Gastrocnemius medialis (tissue), 4 donors: ENCODE measurements at regions of chr3 and their contacts with region 1.

Region 1: DNA sequence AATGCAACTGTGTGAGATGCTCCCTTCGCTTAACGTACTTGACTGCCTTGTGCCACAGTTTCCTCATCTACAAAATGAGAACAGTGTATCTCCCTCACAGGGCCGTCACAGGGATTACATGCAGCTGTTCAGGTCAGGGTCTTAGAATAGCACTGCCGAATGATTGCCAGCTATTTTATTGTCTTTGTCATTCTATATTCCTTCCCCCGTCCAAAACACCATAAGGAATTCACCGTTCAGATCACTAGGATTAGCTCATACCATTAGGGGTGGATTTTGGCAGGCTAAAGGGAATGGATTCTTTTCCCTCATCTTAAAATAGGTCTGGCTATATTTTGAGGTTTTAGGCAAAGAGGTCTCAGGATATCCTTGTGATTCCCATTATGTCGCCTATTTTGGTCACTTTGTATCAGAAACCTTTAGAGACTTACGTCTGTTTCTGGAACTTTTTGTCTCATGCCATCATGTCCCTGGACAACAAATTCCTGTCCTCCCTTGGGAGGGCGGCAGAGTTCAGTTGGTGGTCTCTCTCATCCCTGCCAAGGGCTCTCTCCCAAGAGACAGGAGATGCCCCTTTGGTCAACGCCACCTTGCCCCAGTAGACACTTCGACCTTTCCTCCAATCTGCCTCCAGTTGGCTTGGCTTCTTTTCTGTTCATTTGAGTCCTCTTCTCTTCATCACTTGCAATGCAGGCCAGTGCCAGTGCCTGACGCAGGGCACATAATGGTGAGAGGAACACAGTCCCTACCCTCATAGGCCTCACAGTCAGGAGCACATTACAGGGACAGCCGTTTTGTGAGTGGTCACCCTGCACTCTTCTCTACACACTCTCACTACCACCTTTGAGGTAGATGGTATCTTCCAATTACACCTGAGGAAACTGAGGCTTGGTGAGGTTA is 171.6 kb upstream of the BHLHE40 start:
- DNase-seq: peak; percentile 45 to 81
- ATAC-seq: peak; percentile 82 to 90
- H3K4me3 ChIP-seq: no peak overlapping the region
- H3K27ac ChIP-seq: peak overlapping the region; percentile 76 to 89 (median 80)
- H3K4me1 ChIP-seq: peaks cover 16 to 31% of the 10 kb centered on the region in 2 donors
- H3K27me3 ChIP-seq: no peaks in the 10 kb centered on the region
- CTCF ChIP-seq: peak in 4 of 5 experiments; percentile 25 to 46 (median 33)
- POLR2A ChIP-seq: peak; percentile 9 to 46

Region 2: GRCh38 chr3:4571690-4572334 is 235.8 kb before region 1 on chr3:
- in situ Hi-C with region 1: no loop called
- intact Hi-C with region 1: no loop called
- DNase-seq: no peak
- ATAC-seq: no peak
- H3K4me3 ChIP-seq: no peak overlapping the region
- H3K27ac ChIP-seq: no peak overlapping the region
- H3K4me1 ChIP-seq: no peaks in the 10 kb centered on the region
- H3K27me3 ChIP-seq: no peaks in the 10 kb centered on the region
- CTCF ChIP-seq: no peak
- POLR2A ChIP-seq: no peak

Region 3: DNA sequence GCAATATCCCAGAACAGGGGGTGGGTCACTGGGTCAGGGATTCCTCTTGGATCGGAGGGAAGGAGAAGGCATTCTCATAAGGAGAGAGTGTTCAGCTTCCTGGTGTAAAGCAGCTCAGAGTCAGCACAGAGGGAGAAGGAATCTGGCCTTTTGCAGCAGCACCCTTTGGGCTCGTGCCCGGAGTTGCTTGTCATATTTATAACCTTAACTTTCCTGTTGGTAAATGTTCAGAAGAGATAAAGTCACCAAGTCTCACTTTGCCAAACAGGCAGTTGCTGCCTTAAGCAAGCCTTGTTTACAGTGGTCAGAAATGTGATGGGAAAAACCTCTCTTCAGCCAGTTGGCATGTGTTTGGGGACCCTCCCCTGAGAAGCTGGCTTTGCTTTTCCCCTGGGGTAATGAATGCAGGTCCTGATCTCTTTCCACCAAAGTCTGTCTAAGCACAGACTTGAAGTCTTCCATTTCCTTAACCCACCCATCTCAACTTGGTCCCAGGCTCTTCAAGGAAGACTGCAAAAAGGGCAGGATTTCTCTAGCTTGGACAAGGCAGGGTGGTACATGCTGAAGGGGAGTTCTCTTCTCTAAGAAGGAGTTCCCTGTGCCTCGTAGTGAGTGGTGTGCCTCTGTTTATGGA is 35.3 kb before region 1 on chr3:
- in situ Hi-C with region 1: no loop called
- intact Hi-C with region 1: loop called (anchors 2 kb)
- DNase-seq: peak; percentile 72 to 87
- ATAC-seq: peak; percentile 94 to 95
- H3K4me3 ChIP-seq: no peak overlapping the region
- H3K27ac ChIP-seq: peak overlapping the region; percentile 77 to 83 (median 82)
- H3K4me1 ChIP-seq: peaks cover 36 to 45% of the 10 kb centered on the region in 2 donors
- H3K27me3 ChIP-seq: no peaks in the 10 kb centered on the region
- CTCF ChIP-seq: no peak
- POLR2A ChIP-seq: no peak

Region 4: DNA sequence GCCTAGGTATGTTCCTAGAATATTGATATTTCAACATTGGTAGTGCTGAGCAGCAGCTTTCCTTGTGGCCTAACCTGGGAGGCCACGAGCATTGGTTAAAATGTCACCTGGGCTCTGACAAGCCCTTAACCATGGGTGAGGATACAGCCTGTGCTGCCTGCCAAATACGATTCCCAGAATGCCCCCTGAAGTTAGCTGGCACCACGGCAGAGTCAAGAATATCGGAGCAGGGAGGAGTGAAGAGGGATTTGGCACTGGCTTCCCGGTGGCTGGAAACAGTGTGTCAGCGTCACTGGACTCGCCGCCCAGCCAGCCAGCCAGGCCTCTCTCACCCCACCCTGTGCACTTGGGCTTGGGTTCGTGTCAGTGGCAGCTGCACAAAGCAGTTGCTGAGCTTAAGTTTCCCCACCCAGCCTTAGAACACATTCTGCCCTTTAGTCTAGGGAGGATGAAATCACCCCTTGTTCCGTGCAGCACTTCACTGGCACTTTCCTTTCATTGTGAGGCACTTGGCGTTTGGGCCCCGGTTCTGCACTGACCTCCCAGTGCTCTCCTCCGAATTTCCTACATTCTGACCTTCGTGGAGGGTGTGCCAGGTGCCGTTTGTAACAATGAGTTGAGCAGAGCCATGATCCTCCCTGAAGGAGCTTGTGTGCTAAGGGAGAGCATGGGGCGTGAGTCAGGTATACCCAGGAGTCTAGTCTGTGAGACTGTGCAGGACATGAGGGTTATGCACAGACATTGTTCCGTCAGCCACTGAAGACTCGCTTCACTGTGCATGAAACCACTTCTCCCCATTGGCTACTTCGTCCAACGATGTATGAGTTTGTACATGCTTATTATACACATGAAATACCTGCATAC is 18.8 kb after region 1 on chr3:
- in situ Hi-C with region 1: no loop called
- intact Hi-C with region 1: loop called (anchors 1 kb)
- DNase-seq: peak; percentile 75 to 90
- ATAC-seq: peak; percentile 72 to 74
- H3K4me3 ChIP-seq: peak overlapping the region; percentile 12 to 36 (median 23)
- H3K27ac ChIP-seq: peak overlapping the region; percentile 80 to 89 (median 86)
- H3K4me1 ChIP-seq: peaks cover 48 to 67% of the 10 kb centered on the region in 2 donors
- H3K27me3 ChIP-seq: no peaks in the 10 kb centered on the region
- CTCF ChIP-seq: no peak
- POLR2A ChIP-seq: peak; percentile 67 to 83

Region 5: DNA sequence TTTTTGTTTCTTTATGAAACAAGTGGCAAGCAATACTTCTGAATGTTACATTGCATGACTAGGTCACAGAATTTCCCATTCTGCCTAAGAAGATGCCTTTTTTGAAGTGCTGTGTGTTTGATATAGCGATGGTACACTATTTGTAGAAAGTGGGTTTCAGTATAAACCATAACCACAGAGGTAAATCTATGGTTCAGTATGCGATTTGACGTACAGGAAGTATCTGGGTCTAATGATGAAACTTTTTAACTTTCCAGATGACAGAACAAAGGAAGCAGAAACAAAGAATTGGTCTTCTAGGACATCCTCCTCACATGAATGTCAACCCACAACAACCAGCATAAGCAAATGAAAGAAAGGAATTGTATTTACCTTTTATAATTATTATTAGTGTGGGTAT is 38.3 kb after region 1 on chr3:
- in situ Hi-C with region 1: no loop called
- intact Hi-C with region 1: no loop called
- DNase-seq: no peak
- ATAC-seq: no peak
- H3K4me3 ChIP-seq: no peak overlapping the region
- H3K27ac ChIP-seq: no peak overlapping the region
- H3K4me1 ChIP-seq: peaks cover 12 to 22% of the 10 kb centered on the region in 2 donors
- H3K27me3 ChIP-seq: no peaks in the 10 kb centered on the region
- CTCF ChIP-seq: no peak
- POLR2A ChIP-seq: no peak

Region 6: GRCh38 chr3:5006755-5007202 is 199.1 kb after region 1 on chr3:
- in situ Hi-C with region 1: no loop called
- intact Hi-C with region 1: no loop called
- DNase-seq: no peak
- ATAC-seq: no peak
- H3K4me3 ChIP-seq: no peak overlapping the region
- H3K27ac ChIP-seq: no peak overlapping the region
- H3K4me1 ChIP-seq: no peaks in the 10 kb centered on the region
- H3K27me3 ChIP-seq: no peaks in the 10 kb centered on the region
- CTCF ChIP-seq: no peak
- POLR2A ChIP-seq: no peak

Region 7: DNA sequence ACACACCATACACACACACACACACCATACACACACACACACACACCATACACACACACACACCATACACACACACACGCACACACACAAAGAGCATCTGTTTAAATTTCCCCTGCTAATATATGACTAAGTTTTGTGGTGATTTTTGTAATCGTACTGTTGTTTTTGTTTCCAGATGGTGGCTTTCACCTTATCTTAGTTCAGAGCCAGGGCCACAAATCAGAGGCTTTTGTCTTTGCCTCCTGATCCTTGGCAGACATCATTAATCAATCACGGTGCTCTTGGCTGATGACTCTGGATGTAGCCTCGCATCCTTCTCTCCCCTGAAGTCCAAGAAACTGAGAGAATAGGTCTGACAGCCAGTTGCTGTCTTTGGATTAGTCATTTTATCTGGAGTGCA is 432.0 kb after region 1 on chr3:
- in situ Hi-C with region 1: no loop called
- intact Hi-C with region 1: no loop called
- DNase-seq: no peak
- ATAC-seq: no peak
- H3K4me3 ChIP-seq: no peak overlapping the region
- H3K27ac ChIP-seq: no peak overlapping the region
- H3K4me1 ChIP-seq: no peaks in the 10 kb centered on the region
- H3K27me3 ChIP-seq: no peaks in the 10 kb centered on the region
- CTCF ChIP-seq: no peak
- POLR2A ChIP-seq: no peak